PC-3 (cell line): ENCODE measurements at regions of chr6 and their contacts with region 1.

Region 1: GRCh38 chr6:88982720-88983119 is 19.3 kb upstream of the RNGTT start:
- DNase-seq: peak; percentile 84
- ATAC-seq: peak; percentile 80
- H3K4me3 ChIP-seq: no peak overlapping the region
- H3K27ac ChIP-seq: no peak overlapping the region
- H3K4me1 ChIP-seq: peaks cover 9% of the 10 kb centered on the region; the same call in 1 of the 2 replicates
- H3K27me3 ChIP-seq: no peaks in the 10 kb centered on the region
- CTCF ChIP-seq: peak; percentile 83

Region 2: GRCh38 chr6:89080542-89081422 is 98.1 kb after region 1 on chr6 and contains the start of gene PNRC1:
- CTCF ChIA-PET with region 1: interaction called, 12 read pairs
- POLR2A ChIA-PET with region 1: interaction called, 5 read pairs
- intact Hi-C with region 1: loop called (anchors 1 kb)
- DNase-seq: peak; percentile 95
- ATAC-seq: peak; percentile 80
- H3K4me3 ChIP-seq: peak within 1 kb of the TSS; percentile 90
- H3K27ac ChIP-seq: peak within 1 kb of the TSS; percentile 50
- H3K4me1 ChIP-seq: peaks cover 28% of the 10 kb centered on the region
- H3K27me3 ChIP-seq: no peaks in the 10 kb centered on the region
- CTCF ChIP-seq: no peak
- total RNA-seq, gene PNRC1: 9.3 and 12.7 TPM in 2 replicates

Region 3: GRCh38 chr6:89122625-89123024 is 139.9 kb after region 1 on chr6:
- CTCF ChIA-PET with region 1: interaction called, 3 read pairs
- POLR2A ChIA-PET with region 1: no interaction called
- intact Hi-C with region 1: loop called (anchors 1 kb)
- DNase-seq: peak; percentile 54
- ATAC-seq: peak; percentile 65
- H3K4me3 ChIP-seq: no peak overlapping the region
- H3K27ac ChIP-seq: no peak overlapping the region
- H3K4me1 ChIP-seq: peaks cover 4% of the 10 kb centered on the region; the same call in 1 of the 2 replicates
- H3K27me3 ChIP-seq: no peaks in the 10 kb centered on the region
- CTCF ChIP-seq: peak; percentile 71

Region 4: DNA sequence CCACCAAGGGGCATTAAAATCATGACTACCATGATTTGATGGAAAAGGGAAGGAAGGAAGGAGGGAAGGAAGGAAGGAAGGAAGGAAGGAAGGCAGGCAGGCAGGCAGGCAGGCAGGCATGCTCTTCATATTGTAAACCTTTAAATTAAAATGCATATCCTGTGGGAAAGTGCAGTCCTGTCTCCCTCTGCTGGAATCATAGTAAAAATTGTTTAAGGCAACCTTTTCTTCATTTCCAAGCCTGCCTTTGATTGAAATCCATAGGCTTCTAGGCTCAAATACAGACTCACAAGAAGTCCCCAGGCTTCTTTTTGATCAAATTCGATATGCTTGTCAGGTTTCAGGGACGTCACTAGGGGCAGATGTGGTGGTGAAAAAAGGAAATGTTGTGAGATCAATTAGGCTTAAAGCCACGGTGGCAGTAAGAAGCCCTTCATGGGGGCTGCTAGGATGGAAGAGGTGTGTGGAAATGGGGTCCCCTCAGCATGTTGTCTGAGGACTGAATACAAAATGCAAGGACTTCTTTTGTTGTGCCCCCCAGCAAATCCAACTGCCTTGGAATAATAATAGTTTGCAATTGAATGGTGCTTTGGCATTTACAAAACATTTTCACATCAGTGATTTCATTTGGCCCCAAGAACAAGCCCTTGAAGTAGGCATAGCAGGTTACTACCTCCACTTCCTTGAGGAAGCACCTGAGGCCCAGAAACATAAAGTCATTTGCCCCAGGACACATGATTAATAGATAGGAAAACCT is 260.0 kb after region 1 on chr6:
- CTCF ChIA-PET with region 1: interaction called, 11 read pairs
- POLR2A ChIA-PET with region 1: no interaction called
- intact Hi-C with region 1: loop called (anchors 1 kb)
- DNase-seq: peak; percentile 58
- ATAC-seq: peak; percentile 70
- H3K4me3 ChIP-seq: no peak overlapping the region
- H3K27ac ChIP-seq: no peak overlapping the region
- H3K4me1 ChIP-seq: no peaks in the 10 kb centered on the region
- H3K27me3 ChIP-seq: no peaks in the 10 kb centered on the region; the same call in 1 of the 2 replicates
- CTCF ChIP-seq: peak; percentile 59

Region 5: GRCh38 chr6:89371849-89372505 is 389.3 kb after region 1 on chr6:
- CTCF ChIA-PET with region 1: no interaction called
- POLR2A ChIA-PET with region 1: no interaction called
- intact Hi-C with region 1: loop called (anchors 1 kb)
- DNase-seq: peak; percentile 73
- ATAC-seq: peak; percentile 84
- H3K4me3 ChIP-seq: no peak overlapping the region
- H3K27ac ChIP-seq: no peak overlapping the region
- H3K4me1 ChIP-seq: peaks cover 5% of the 10 kb centered on the region
- H3K27me3 ChIP-seq: no peaks in the 10 kb centered on the region
- CTCF ChIP-seq: peak; percentile 86